ENCODE measurements at regions of chr15 and their contacts with region 1.

Region 1: GRCh38 chr15:67163180-67163579 is 91.3 kb downstream of the AAGAB start:
- DNase-seq: no peak
- H3K4me3 ChIP-seq: no peak overlapping the region
- H3K27ac ChIP-seq: peak overlapping the region; percentile 39
- H3K4me1 ChIP-seq: peaks cover 87% of the 10 kb centered on the region
- H3K27me3 ChIP-seq: no peaks in the 10 kb centered on the region
- CTCF ChIP-seq: no peak

Region 2: DNA sequence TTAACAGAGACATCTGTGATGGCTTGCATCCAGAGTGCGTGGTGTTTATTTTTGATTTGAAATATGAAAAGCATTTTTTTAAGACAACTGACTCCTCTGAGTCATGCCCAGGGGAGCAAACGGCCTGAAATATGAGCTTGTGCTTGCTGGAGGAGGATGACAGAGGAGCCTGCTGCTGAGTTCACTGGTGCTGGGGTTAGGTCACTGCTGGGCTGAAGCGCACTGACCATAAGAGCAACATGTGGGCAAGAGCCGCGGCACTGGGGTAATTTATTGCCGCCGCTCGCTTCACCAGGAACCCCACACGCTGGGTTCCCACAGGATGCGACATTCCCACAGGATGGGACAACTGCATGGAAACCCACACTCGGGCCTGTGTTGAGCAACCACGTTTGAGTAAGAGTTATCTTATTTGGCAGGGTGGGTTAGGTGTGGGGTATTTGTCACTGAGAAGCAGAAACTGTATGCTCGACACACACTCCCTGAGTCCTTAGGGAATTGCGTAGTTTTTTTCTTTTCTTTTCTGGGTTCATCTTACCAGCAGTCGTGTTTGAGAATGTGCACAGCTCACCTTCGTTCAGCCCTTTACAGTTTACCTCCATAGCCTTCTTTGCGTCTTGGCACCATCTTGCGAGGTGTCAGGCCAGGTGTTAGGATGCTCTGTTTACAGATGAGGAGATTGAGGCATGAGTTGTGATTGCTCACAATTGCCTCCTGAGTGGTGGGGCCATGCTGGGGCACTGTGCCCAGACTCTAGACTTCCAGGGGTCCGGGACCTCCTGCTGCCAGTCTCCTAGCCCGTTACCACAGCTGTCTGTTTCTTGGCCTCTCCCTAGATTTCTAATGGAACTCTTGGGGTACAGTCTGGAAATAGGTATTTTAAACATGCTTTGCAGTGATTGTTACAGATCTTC is 37.3 kb before region 1 on chr15:
- CTCF ChIA-PET with region 1: no interaction called
- POLR2A ChIA-PET with region 1: interaction called, 11 read pairs
- intact Hi-C with region 1: no loop called
- DNase-seq: no peak
- H3K4me3 ChIP-seq: no peak overlapping the region
- H3K27ac ChIP-seq: peak overlapping the region; percentile 48
- H3K4me1 ChIP-seq: peaks cover 27% of the 10 kb centered on the region
- H3K27me3 ChIP-seq: no peaks in the 10 kb centered on the region
- CTCF ChIP-seq: no peak

Region 3: GRCh38 chr15:67495585-67495984 is 332.4 kb after region 1 on chr15:
- CTCF ChIA-PET with region 1: no interaction called
- POLR2A ChIA-PET with region 1: no interaction called
- intact Hi-C with region 1: no loop called
- DNase-seq: no peak
- H3K4me3 ChIP-seq: no peak overlapping the region
- H3K27ac ChIP-seq: no peak overlapping the region
- H3K4me1 ChIP-seq: no peaks in the 10 kb centered on the region
- H3K27me3 ChIP-seq: no peaks in the 10 kb centered on the region
- CTCF ChIP-seq: no peak